HCT116 (cell line): ENCODE measurements at regions of chr6 and their contacts with region 1.

Region 1: GRCh38 chr6:42043787-42044475 is 6.4 kb upstream of the TAF8 start:
- DNase-seq: peak; percentile 62
- ATAC-seq: peak; percentile 87
- H3K4me3 ChIP-seq: no peak overlapping the region
- H3K27ac ChIP-seq: no peak overlapping the region
- H3K4me1 ChIP-seq: peaks cover 29 to 41% of the 10 kb centered on the region in 2 experiments
- H3K27me3 ChIP-seq: no peaks in the 10 kb centered on the region
- CTCF ChIP-seq: peak in 2 of 3 experiments; percentile 96; a peak in 4 of 6 replicates
- POLR2A ChIP-seq: no peak
- RAD21 ChIP-seq: no peak

Region 2: GRCh38 chr6:41705996-41706835 is 337.7 kb before region 1 on chr6:
- CTCF ChIA-PET with region 1: no interaction called
- POLR2A ChIA-PET with region 1: no interaction called
- RAD21 ChIA-PET with region 1: no interaction called
- intact Hi-C with region 1: loop called (anchors 5 kb)
- DNase-seq: no peak
- ATAC-seq: peak; percentile 97
- H3K4me3 ChIP-seq: no peak overlapping the region
- H3K27ac ChIP-seq: peak overlapping the region; percentile 40
- H3K4me1 ChIP-seq: peaks cover 0 to 14% of the 10 kb centered on the region in 2 experiments; a peak in 3 of 4 replicates
- H3K27me3 ChIP-seq: no peaks in the 10 kb centered on the region
- CTCF ChIP-seq: peak; percentile 84 to 93 (median 90)
- POLR2A ChIP-seq: no peak
- RAD21 ChIP-seq: peak; percentile 83

Region 3: GRCh38 chr6:41779793-41780545 is 264.0 kb before region 1 on chr6 and contains the start of gene FRS3:
- CTCF ChIA-PET with region 1: interaction called, 13 read pairs
- POLR2A ChIA-PET with region 1: interaction called, 3 read pairs
- RAD21 ChIA-PET with region 1: no interaction called
- intact Hi-C with region 1: loop called (anchors 1 kb)
- DNase-seq: peak; percentile 90
- ATAC-seq: peak; percentile 91
- H3K4me3 ChIP-seq: peak within 1 kb of the TSS; percentile 77 to 83
- H3K27ac ChIP-seq: peak within 1 kb of the TSS; percentile 69
- H3K4me1 ChIP-seq: peaks cover 14 to 23% of the 10 kb centered on the region in 2 experiments
- H3K27me3 ChIP-seq: no peaks in the 10 kb centered on the region
- CTCF ChIP-seq: peak in 2 of 3 experiments; percentile 86 to 90; a peak in 4 of 6 replicates
- POLR2A ChIP-seq: no peak
- RAD21 ChIP-seq: no peak
- total RNA-seq, gene FRS3: 5.9 TPM

Region 4: DNA sequence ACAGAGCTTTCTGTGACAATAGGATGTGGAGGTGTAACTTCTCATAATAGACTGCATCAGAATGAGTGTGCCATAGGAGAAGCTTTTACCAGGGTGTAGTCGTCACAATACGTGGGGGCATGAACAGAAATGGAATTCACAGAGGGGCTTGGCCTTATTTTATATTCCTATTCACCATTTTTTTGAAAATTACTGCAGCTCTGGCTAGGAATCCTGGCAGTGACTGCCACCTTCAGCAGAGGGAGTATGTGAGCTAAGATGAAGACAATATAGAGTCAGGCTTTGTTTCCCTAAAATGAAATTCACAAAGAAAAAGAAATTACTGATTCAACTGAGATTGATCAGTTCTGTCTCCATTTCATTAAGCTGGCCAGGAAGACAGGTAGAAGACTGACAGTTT is 242.6 kb before region 1 on chr6:
- CTCF ChIA-PET with region 1: interaction called, 8 read pairs
- POLR2A ChIA-PET with region 1: no interaction called
- RAD21 ChIA-PET with region 1: no interaction called
- intact Hi-C with region 1: loop called (anchors 1 kb)
- DNase-seq: no peak
- ATAC-seq: peak; percentile 76
- H3K4me3 ChIP-seq: no peak overlapping the region
- H3K27ac ChIP-seq: no peak overlapping the region
- H3K4me1 ChIP-seq: no peaks in the 10 kb centered on the region
- H3K27me3 ChIP-seq: no peaks in the 10 kb centered on the region
- CTCF ChIP-seq: peak; percentile 52 to 64 (median 59); a peak in 5 of 6 replicates
- POLR2A ChIP-seq: no peak
- RAD21 ChIP-seq: peak; percentile 71

Region 5: GRCh38 chr6:41846666-41847237 is 197.2 kb before region 1 on chr6:
- CTCF ChIA-PET with region 1: interaction called, 4 read pairs
- POLR2A ChIA-PET with region 1: no interaction called
- RAD21 ChIA-PET with region 1: no interaction called
- intact Hi-C with region 1: loop called (anchors 1 kb)
- DNase-seq: peak; percentile 68
- ATAC-seq: peak; percentile 95
- H3K4me3 ChIP-seq: no peak overlapping the region
- H3K27ac ChIP-seq: peak overlapping the region; percentile 52; the same call in 1 of the 2 replicates
- H3K4me1 ChIP-seq: peaks cover 5 to 9% of the 10 kb centered on the region in 2 experiments
- H3K27me3 ChIP-seq: no peaks in the 10 kb centered on the region
- CTCF ChIP-seq: peak; percentile 78 to 87 (median 80)
- POLR2A ChIP-seq: no peak
- RAD21 ChIP-seq: peak; percentile 83

Region 6: GRCh38 chr6:41941280-41942066 is 102.5 kb before region 1 on chr6 and contains the start of gene CCND3:
- CTCF ChIA-PET with region 1: interaction called, 7 read pairs
- POLR2A ChIA-PET with region 1: no interaction called
- RAD21 ChIA-PET with region 1: interaction called, 3 to 4 read pairs
- intact Hi-C with region 1: loop called (anchors 5 kb)
- DNase-seq: peak; percentile 68
- ATAC-seq: peak; percentile 93
- H3K4me3 ChIP-seq: peak within 1 kb of the TSS; percentile 81 to 88
- H3K27ac ChIP-seq: peak within 1 kb of the TSS; percentile 50
- H3K4me1 ChIP-seq: peaks cover 12 to 31% of the 10 kb centered on the region in 2 experiments; a peak in 3 of 4 replicates
- H3K27me3 ChIP-seq: no peaks in the 10 kb centered on the region
- CTCF ChIP-seq: no peak
- POLR2A ChIP-seq: no peak
- RAD21 ChIP-seq: no peak
- total RNA-seq, gene CCND3: 26.6 TPM

Region 7: GRCh38 chr6:42136508-42137193 is 92.7 kb after region 1 on chr6:
- CTCF ChIA-PET with region 1: no interaction called
- POLR2A ChIA-PET with region 1: no interaction called
- RAD21 ChIA-PET with region 1: no interaction called
- intact Hi-C with region 1: no loop called
- DNase-seq: peak; percentile 88
- ATAC-seq: peak; percentile 75
- H3K4me3 ChIP-seq: peak overlapping the region; percentile 28 to 36
- H3K27ac ChIP-seq: peak overlapping the region; percentile 89
- H3K4me1 ChIP-seq: peaks cover 63 to 90% of the 10 kb centered on the region in 2 experiments
- H3K27me3 ChIP-seq: no peaks in the 10 kb centered on the region
- CTCF ChIP-seq: peak in 2 of 3 experiments; percentile 45 to 57; a peak in 4 of 6 replicates
- POLR2A ChIP-seq: no peak
- RAD21 ChIP-seq: no peak